H1 (cell line): ENCODE measurements at regions of chr19 and their contacts with region 1.

Region 1: DNA sequence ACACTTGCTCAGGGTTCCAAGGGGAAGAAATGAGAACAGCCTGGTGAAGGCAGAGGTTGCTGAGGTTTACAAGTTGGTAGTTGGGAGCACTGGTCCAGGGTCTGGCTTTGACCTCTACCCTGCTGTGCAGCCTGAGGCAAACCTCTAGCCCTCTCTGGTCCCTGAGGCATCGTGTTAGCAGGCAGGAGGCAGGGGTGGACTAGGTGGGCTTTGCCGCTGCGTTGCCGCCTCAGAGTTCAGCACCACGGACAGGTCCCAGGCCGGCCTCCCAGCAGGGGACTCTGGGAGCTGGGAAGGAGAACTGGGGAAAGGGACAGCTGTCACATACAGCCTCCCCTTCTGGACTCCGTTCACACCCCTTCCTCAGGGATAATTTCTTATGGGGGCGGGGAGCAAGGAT is 3.1 kb downstream of the NCAN start:
- DNase-seq: peak in 1 of 2 experiments; percentile 100
- H3K4me3 ChIP-seq: no peak overlapping the region
- H3K27ac ChIP-seq: no peak overlapping the region
- H3K4me1 ChIP-seq: peaks cover 0 to 16% (median 10%) of the 10 kb centered on the region in 4 experiments; a peak in 6 of 7 replicates
- H3K27me3 ChIP-seq: peaks cover 11 to 35% (median 30%) of the 10 kb centered on the region in 4 experiments
- CTCF ChIP-seq: no peak
- EP300 ChIP-seq: no peak
- POLR2A ChIP-seq: no peak
- RAD21 ChIP-seq: no peak

Region 2: GRCh38 chr19:19224852-19225494 is 10.1 kb after region 1 on chr19:
- CTCF ChIA-PET with region 1: interaction called, 16 read pairs
- POLR2A ChIA-PET with region 1: interaction called, 7 read pairs
- DNase-seq: peak; percentile 73 to 91
- H3K4me3 ChIP-seq: peak overlapping the region; percentile 17 to 59 (median 33)
- H3K27ac ChIP-seq: no peak overlapping the region
- H3K4me1 ChIP-seq: peaks cover 0 to 7% (median 3%) of the 10 kb centered on the region in 4 experiments; a peak in 4 of 7 replicates
- H3K27me3 ChIP-seq: peaks cover 2 to 17% (median 11%) of the 10 kb centered on the region in 4 experiments
- CTCF ChIP-seq: peak; percentile 76 to 78 (median 76)
- EP300 ChIP-seq: no peak
- POLR2A ChIP-seq: no peak
- RAD21 ChIP-seq: peak; percentile 63 to 68